Dorsolateral prefrontal cortex (tissue), 120 donors: ENCODE measurements at regions of chr15 and their contacts with region 1.

Region 1: DNA sequence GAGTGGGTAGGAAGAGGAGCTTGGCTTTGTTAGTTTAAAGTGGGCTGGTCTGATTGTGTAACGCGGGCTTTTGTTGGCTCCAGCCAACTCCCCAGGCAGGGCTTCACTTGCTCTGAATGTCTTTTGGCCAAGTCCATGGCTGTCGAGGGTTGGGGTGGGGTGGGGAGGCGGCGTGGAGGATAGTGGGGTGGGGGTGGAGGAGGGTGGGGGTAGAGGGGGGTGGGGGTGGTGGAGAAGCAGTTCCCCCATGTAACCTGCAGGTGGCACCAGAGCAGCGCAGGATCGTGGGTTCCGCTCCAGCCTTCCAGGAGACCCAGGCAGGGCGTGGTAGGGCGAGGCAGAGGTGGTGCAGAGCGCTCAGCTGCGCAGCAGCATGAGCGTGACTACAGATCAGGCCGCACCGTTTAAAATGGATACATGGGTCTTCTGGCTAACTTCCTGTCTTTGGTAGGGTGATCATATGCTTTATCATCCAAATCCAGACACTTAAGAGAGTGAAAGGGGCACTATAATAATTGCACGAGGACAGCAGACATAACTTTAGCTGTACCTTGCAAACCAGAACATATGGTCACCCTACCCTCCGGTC is 28.3 kb downstream of the GOLGA6A start:
- DNase-seq: peak in 8 of 10 donors; percentile 39 to 68 (median 50)
- H3K4me3 ChIP-seq: peak overlapping the region in 38 of 59 donors; percentile 6 to 58 (median 34)
- H3K27ac ChIP-seq: peak overlapping the region in 1 of 59 donors; percentile 28
- H3K27me3 ChIP-seq: no peaks in the 10 kb centered on the region
- CTCF ChIP-seq: peak in 54 of 56 donors; percentile 36 to 73 (median 60)

Region 2: GRCh38 chr15:74134387-74135027 is 80.5 kb after region 1 on chr15:
- intact Hi-C with region 1: loop called in 1 of 2 experiments (anchors 5 kb)
- DNase-seq: peak in 1 of 10 donors; percentile 38
- H3K4me3 ChIP-seq: no peak overlapping the region
- H3K27ac ChIP-seq: peak overlapping the region in 2 of 59 donors; percentile 29 to 73
- H3K27me3 ChIP-seq: peaks cover 0 to 79% (median 55%) of the 10 kb centered on the region in 45 donors
- CTCF ChIP-seq: peak in 30 of 56 donors; percentile 4 to 48 (median 31)